Endothelial cell of umbilical vein (primary cell): ENCODE measurements at regions of chr6 and their contacts with region 1.

Region 1: GRCh38 chr6:85482905-85483700 is 33.2 kb downstream of the NT5E start:
- DNase-seq: peak; percentile 80
- H3K4me3 ChIP-seq: no peak overlapping the region
- H3K27ac ChIP-seq: peak overlapping the region; percentile 12
- H3K4me1 ChIP-seq: peaks cover 7% of the 10 kb centered on the region
- H3K27me3 ChIP-seq: no peaks in the 10 kb centered on the region
- CTCF ChIP-seq: peak; percentile 96 to 98
- POLR2A ChIP-seq: no peak

Region 2: GRCh38 chr6:85323435-85324040 is 159.6 kb before region 1 on chr6:
- CTCF ChIA-PET with region 1: interaction called, 14 read pairs
- POLR2A ChIA-PET with region 1: no interaction called
- dilution Hi-C with region 1: no loop called
- intact Hi-C with region 1: no loop called
- DNase-seq: peak; percentile 80
- H3K4me3 ChIP-seq: no peak overlapping the region
- H3K27ac ChIP-seq: no peak overlapping the region
- H3K4me1 ChIP-seq: no peaks in the 10 kb centered on the region
- H3K27me3 ChIP-seq: peaks cover 3 to 4% of the 10 kb centered on the region in 2 experiments
- CTCF ChIP-seq: peak; percentile 74 to 83
- POLR2A ChIP-seq: no peak

Region 3: DNA sequence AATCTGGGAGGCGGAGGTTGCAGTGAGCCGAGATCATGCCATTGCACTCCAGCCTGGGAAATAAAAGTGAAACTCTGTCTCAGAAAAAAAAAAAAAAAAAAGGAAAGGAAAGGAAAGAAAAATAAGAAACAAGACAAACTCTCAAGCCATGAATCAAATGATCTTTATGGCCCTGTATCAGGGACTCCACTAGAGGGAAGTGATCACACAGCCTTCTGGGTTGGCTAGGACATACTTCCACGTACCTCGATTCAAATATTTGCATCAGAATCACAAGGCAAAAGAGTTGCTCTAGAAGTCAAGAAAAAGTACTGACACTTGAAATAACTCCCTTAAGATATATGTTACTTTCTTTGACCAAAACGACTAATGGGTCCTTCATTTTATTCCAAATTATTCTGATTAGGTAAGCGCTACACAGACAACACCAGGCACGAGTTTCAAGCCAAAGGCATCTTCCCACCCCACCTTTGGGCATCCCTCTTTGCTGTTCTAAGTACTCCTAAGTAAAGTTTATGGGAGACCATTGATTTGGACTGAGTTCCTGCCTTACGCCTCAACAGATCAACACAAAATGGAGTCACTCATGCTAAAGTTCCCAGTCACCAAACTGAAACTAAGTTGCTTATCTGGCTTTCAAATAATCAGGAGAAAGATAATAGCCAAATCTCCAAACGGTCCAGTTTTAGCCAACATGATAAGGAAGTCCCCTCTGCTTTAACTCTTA is 110.8 kb before region 1 on chr6:
- CTCF ChIA-PET with region 1: interaction called, 17 read pairs
- POLR2A ChIA-PET with region 1: no interaction called
- dilution Hi-C with region 1: no loop called
- intact Hi-C with region 1: no loop called
- DNase-seq: peak; percentile 30
- H3K4me3 ChIP-seq: no peak overlapping the region
- H3K27ac ChIP-seq: no peak overlapping the region
- H3K4me1 ChIP-seq: no peaks in the 10 kb centered on the region
- H3K27me3 ChIP-seq: no peaks in the 10 kb centered on the region
- CTCF ChIP-seq: peak in 1 of 2 donors; percentile 24
- POLR2A ChIP-seq: no peak

Region 4: DNA sequence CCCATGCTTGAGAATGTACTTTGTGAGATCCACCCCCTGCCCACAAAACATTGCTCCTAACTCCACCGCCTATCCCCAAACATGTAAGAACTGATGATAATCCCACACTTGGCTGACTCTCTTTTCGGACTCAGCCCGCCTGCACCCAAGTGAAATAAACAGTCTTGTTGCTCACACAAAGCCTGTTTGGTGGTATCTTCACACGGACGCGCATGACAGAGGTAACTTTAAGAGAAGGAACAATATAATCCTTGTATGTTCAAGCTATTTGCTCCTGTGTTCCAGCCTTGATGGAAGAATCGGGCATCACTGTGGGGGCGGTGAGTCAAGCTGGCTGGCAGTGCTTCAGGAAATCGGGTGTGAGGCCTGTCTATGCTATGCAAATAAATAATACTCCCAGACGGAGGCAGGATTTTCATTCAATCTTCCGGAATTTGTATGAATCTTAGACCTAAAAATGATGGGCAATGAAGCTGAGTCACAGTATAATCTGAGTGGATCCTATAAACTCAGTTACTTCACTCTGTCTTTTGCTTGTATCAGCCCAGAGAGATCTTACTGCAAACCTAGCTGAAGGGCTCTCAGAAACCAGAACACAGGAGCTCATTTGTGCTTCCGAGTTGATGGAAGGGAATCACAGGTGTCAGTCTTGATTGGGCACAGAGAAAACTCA is 78.5 kb before region 1 on chr6:
- CTCF ChIA-PET with region 1: interaction called, 64 read pairs
- POLR2A ChIA-PET with region 1: no interaction called
- dilution Hi-C with region 1: no loop called
- intact Hi-C with region 1: loop called (anchors 1 kb)
- DNase-seq: peak; percentile 93
- H3K4me3 ChIP-seq: peak overlapping the region in 1 of 3 experiments; percentile 14
- H3K27ac ChIP-seq: peak overlapping the region; percentile 94
- H3K4me1 ChIP-seq: peaks cover 55% of the 10 kb centered on the region
- H3K27me3 ChIP-seq: no peaks in the 10 kb centered on the region
- CTCF ChIP-seq: no peak
- POLR2A ChIP-seq: peak; percentile 43

Region 5: GRCh38 chr6:85443349-85444119 is 39.6 kb before region 1 on chr6:
- CTCF ChIA-PET with region 1: interaction called, 541 read pairs
- POLR2A ChIA-PET with region 1: no interaction called
- dilution Hi-C with region 1: no loop called
- intact Hi-C with region 1: no loop called
- DNase-seq: no peak
- H3K4me3 ChIP-seq: no peak overlapping the region
- H3K27ac ChIP-seq: no peak overlapping the region
- H3K4me1 ChIP-seq: peaks cover 1% of the 10 kb centered on the region
- H3K27me3 ChIP-seq: no peaks in the 10 kb centered on the region
- CTCF ChIP-seq: no peak
- POLR2A ChIP-seq: no peak

Region 6: GRCh38 chr6:85472749-85473148 is 10.4 kb before region 1 on chr6:
- CTCF ChIA-PET with region 1: interaction called, 541 read pairs
- POLR2A ChIA-PET with region 1: no interaction called
- dilution Hi-C with region 1: no loop called
- intact Hi-C with region 1: no loop called
- DNase-seq: no peak
- H3K4me3 ChIP-seq: no peak overlapping the region
- H3K27ac ChIP-seq: no peak overlapping the region
- H3K4me1 ChIP-seq: peaks cover 5% of the 10 kb centered on the region
- H3K27me3 ChIP-seq: no peaks in the 10 kb centered on the region
- CTCF ChIP-seq: no peak
- POLR2A ChIP-seq: no peak